ENCODE measurements at regions of chr3 and their contacts with region 1.

Region 1: GRCh38 chr3:45852828-45853227 is 10.9 kb upstream of the LZTFL1 start:
- DNase-seq: peak; percentile 9
- ATAC-seq: peak; percentile 78
- H3K4me3 ChIP-seq: no peak overlapping the region
- H3K27ac ChIP-seq: no peak overlapping the region
- H3K4me1 ChIP-seq: peaks cover 27% of the 10 kb centered on the region
- H3K27me3 ChIP-seq: no peaks in the 10 kb centered on the region
- CTCF ChIP-seq: no peak
- EP300 ChIP-seq: peak in 1 of 2 experiments; percentile 44; a peak in 1 of 4 replicates
- POLR2A ChIP-seq: no peak
- RAD21 ChIP-seq: peak; percentile 25; the same call in 1 of the 2 replicates

Region 2: GRCh38 chr3:45864760-45865519 is 12.1 kb after region 1 on chr3:
- CTCF ChIA-PET with region 1: interaction called, 15 read pairs
- POLR2A ChIA-PET with region 1: interaction called, 5 read pairs
- RAD21 ChIA-PET with region 1: interaction called, 14 read pairs
- SMC1A ChIA-PET with region 1: interaction called, 71 read pairs
- in situ Hi-C with region 1: no loop called
- intact Hi-C with region 1: no loop called
- DNase-seq: peak; percentile 71
- ATAC-seq: peak; percentile 84
- H3K4me3 ChIP-seq: no peak overlapping the region
- H3K27ac ChIP-seq: peak overlapping the region; percentile 90
- H3K4me1 ChIP-seq: peaks cover 71% of the 10 kb centered on the region
- H3K27me3 ChIP-seq: no peaks in the 10 kb centered on the region; a peak in 2 of 4 replicates
- CTCF ChIP-seq: no peak
- EP300 ChIP-seq: peak; percentile 99
- POLR2A ChIP-seq: no peak; the same call in 1 of the 2 replicates
- RAD21 ChIP-seq: peak; percentile 35

Region 3: DNA sequence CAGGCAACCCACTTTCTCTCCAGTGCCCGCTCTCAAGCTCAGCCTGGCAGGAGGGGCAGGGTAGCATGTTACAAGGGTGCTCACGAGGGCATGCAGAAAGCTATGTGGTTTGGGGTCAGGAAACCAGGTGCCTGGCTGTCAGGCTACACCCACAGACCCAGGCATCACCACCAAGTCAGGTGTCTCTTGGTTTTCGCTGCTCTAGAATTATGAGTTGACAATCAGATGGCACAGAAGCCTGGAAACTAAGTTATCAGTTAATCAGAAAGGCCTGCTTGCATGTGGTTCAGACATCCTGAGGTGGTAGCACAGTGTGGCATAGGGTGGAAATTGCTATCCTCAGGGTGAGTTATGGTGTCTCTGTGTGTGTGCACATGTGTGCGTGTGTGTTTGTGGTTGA is 17.3 kb after region 1 on chr3:
- CTCF ChIA-PET with region 1: interaction called, 9 read pairs
- POLR2A ChIA-PET with region 1: interaction called, 3 read pairs
- RAD21 ChIA-PET with region 1: interaction called, 14 read pairs
- SMC1A ChIA-PET with region 1: interaction called, 71 read pairs
- in situ Hi-C with region 1: no loop called
- intact Hi-C with region 1: no loop called
- DNase-seq: no peak
- ATAC-seq: peak; percentile 64
- H3K4me3 ChIP-seq: no peak overlapping the region
- H3K27ac ChIP-seq: no peak overlapping the region
- H3K4me1 ChIP-seq: peaks cover 43% of the 10 kb centered on the region
- H3K27me3 ChIP-seq: no peaks in the 10 kb centered on the region; a peak in 1 of 4 replicates
- CTCF ChIP-seq: no peak
- EP300 ChIP-seq: peak in 1 of 2 experiments; percentile 62; a peak in 2 of 4 replicates
- POLR2A ChIP-seq: no peak
- RAD21 ChIP-seq: no peak

Region 4: DNA sequence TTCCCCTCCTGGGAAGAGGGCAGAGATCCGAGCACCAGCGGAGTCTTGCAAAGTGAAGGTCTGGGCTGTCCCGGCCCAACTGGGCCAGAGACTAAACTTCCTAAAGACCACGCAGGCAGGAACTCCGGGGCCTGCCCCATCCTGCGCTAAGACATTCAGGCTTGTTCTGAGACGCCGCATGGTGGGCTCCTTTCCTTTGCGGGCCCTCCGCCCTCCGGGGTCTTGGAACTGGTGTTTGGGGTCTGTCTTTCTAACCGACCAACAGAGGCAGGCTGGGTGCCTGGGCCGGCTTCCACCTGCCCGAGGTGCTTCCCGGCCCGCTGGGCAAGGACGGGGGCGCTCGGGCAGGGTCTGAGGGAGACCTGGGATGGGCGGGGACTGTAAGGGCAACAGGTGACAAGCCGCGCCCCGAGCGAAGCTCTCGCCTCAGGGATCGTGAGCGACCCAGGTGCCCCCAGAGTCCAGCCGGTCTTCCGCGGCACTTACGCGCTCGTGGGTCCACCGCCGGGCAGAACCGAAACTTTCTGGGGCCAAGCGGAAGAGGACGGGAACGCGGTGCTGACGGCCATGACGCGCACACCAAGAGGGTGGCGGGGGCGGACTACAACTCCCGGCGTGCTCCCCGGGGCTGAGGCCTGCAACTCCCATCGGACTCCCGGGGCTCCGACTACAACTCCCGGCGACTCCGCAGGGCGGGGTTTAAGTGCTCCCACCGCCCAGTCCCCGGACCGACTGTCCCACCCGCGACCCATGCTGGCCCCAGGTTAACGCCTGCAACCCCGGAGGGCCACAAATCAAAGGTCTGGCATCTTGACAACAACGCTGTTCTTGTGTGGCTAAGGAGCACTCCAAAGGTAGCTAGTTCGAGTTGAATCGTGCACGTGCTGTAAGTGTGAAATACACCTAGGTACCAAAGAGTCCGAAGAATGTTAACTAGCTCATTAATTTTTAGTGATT is 142.7 kb after region 1 on chr3 and contains the start of gene FYCO1:
- CTCF ChIA-PET with region 1: no interaction called
- POLR2A ChIA-PET with region 1: no interaction called
- RAD21 ChIA-PET with region 1: no interaction called
- SMC1A ChIA-PET with region 1: no interaction called
- in situ Hi-C with region 1: no loop called
- intact Hi-C with region 1: no loop called
- DNase-seq: peak; percentile 59
- ATAC-seq: peak; percentile 94
- H3K4me3 ChIP-seq: peak within 1 kb of the TSS; percentile 79
- H3K27ac ChIP-seq: peak within 1 kb of the TSS; percentile 90
- H3K4me1 ChIP-seq: peaks cover 30% of the 10 kb centered on the region
- H3K27me3 ChIP-seq: no peaks in the 10 kb centered on the region
- CTCF ChIP-seq: no peak
- EP300 ChIP-seq: peak in 1 of 2 experiments; percentile 34; a peak in 1 of 4 replicates
- POLR2A ChIP-seq: peak; percentile 88
- RAD21 ChIP-seq: no peak
- polyA plus RNA-seq, gene FYCO1: 1.5 to 2.2 TPM

Measured in GM12878 (cell line).